Activated T-helper 1 cell treated with anti-CD3 and anti-CD28 coated beads, Interleukin-12 subunit alpha, Interleukin-12 subunit beta, Interleukin-2, Interleukin-4 antibody, amounts not matched to agents 30 ng/mL and 10 ng/mL and 1 ng/mL, durations not matched to agents 14 hours and 24 hours and 36 hours (primary cell): ENCODE measurements at regions of chr2 and their contacts with region 1.

Region 1: DNA sequence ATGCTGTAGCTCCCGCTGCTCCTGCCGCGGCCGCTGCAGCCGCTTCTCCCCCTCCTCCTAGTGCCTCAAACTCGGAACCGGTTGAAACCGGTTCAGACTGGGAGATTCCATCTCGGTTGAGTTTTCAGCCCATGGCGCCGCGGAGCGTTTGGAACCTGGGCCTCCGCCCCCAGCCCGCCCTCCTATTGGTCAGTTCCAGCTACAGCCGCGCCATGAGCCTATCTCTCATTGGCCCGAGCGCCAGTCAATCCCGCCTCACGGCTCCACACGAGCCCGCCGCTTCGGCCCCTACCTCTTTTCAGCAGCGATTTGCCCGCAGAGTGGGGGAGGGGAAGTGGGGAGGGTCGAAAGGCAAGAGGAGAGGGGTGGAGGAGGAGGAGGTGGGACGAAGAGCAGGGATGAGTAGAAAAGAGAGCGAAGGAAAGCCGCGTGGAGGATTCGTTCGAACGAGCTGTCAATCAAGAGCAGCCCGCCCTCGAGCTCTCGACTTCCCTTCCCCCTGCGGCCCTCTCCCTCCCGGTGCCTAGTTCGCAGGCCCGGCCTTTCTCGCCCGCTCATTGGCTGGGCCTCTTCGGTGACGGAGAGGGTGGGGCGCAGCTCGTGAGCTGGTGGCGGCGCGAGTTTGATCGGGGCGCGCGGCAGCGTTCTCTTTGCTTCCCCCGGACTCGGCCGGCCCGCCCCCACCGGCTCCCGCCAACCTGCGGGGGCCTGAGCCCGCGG is at the start of gene XPO1:
- DNase-seq: peak; percentile 99
- H3K4me3 Mint-ChIP-seq: peak within 1 kb of the TSS; percentile 100
- H3K27ac Mint-ChIP-seq: peak within 1 kb of the TSS; percentile 100
- H3K4me1 Mint-ChIP-seq: peaks cover 35% of the 10 kb centered on the region
- H3K27me3 Mint-ChIP-seq: peaks cover 4% of the 10 kb centered on the region
- total RNA-seq, gene XPO1: 213 and 215 TPM in 2 replicates

Region 2: DNA sequence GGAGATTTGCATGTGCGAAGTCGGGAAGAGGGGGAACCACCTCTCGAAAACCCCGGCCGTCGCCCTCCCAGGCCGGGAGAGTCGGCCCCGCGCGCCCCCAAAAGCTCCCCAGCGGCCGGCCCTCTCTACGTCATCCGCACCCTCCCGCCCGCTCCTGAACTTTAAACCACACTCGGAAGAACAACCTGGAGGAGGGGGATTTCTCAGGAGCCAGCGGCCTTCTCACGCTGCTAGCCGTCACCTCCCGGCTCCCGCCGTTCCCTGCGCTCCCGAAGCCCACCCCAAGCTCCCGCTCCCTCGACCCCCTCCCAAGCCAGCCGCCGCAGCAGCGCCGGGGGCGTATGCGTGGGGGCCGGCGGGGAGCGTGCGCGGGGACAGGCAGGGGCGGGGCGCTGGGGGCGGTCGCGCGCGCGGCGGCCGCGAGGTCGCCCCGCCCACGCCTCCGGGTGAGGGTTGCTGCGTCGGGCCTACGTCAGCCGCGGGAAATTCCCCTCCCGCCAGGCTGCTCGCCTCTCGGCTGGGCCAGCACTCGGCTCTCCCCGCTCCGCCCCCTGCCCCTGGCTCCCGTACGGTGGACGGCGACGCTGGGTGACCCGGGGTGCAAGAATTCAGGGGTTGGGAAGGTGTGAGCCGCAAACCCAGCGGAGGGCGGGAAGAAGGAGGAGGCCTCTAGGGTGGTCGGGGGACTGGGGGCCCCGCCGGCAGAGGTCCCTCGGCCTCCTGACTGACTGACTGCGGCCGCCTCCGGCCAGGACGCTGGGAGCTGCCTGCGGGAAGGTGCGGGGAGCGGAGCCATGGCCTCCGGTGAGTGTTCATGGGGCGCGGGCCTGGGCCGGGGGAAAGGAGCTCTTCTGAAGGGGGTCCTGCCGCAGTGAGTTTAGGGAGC is 657.1 kb before region 1 on chr2 and contains the start of gene REL:
- intact Hi-C with region 1: loop called (anchors 1 kb)
- DNase-seq: peak; percentile 89
- H3K4me3 Mint-ChIP-seq: peak within 1 kb of the TSS; percentile 99
- H3K27ac Mint-ChIP-seq: peak within 1 kb of the TSS; percentile 99
- H3K4me1 Mint-ChIP-seq: peaks cover 45% of the 10 kb centered on the region
- H3K27me3 Mint-ChIP-seq: no peaks in the 10 kb centered on the region
- total RNA-seq, gene REL: 93.6 and 97.2 TPM in 2 replicates

Region 3: GRCh38 chr2:61144697-61145268 is 393.6 kb before region 1 on chr2:
- intact Hi-C with region 1: loop called (anchors 1 kb)
- DNase-seq: peak; percentile 92
- H3K4me3 Mint-ChIP-seq: peak overlapping the region; percentile 94
- H3K27ac Mint-ChIP-seq: peak overlapping the region; percentile 94
- H3K4me1 Mint-ChIP-seq: peaks cover 5% of the 10 kb centered on the region
- H3K27me3 Mint-ChIP-seq: no peaks in the 10 kb centered on the region

Region 4: GRCh38 chr2:61470965-61471904 is 67.1 kb before region 1 on chr2 and contains the start of gene USP34:
- intact Hi-C with region 1: loop called (anchors 1 kb)
- DNase-seq: peak; percentile 88
- H3K4me3 Mint-ChIP-seq: peak within 1 kb of the TSS; percentile 95
- H3K27ac Mint-ChIP-seq: peak within 1 kb of the TSS; percentile 94
- H3K4me1 Mint-ChIP-seq: peaks cover 28% of the 10 kb centered on the region
- H3K27me3 Mint-ChIP-seq: no peaks in the 10 kb centered on the region
- total RNA-seq, gene USP34: 91.3 and 98.1 TPM in 2 replicates

Region 5: DNA sequence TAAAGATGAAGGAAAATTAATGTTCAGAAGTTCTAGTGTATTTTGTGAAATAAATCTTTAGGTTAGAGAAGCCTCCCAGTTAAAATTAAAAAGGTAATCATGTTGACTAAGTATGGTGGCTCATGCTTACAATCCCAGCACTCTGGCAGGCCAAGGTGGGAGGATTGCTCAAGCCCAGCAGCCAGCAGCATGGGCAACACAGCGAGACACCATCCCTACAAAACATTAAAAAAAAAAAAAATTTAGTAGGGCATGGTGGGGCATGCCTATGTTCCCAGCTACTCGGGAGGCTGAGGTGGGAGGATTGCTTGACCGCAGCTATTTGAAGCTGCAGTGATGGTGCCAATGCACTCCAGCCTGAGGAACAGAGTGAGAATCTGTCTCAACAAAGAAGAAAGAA is 18.1 kb before region 1 on chr2:
- intact Hi-C with region 1: no loop called
- DNase-seq: no peak
- H3K4me3 Mint-ChIP-seq: no peak overlapping the region
- H3K27ac Mint-ChIP-seq: no peak overlapping the region
- H3K4me1 Mint-ChIP-seq: peaks cover 29% of the 10 kb centered on the region
- H3K27me3 Mint-ChIP-seq: no peaks in the 10 kb centered on the region

Region 6: DNA sequence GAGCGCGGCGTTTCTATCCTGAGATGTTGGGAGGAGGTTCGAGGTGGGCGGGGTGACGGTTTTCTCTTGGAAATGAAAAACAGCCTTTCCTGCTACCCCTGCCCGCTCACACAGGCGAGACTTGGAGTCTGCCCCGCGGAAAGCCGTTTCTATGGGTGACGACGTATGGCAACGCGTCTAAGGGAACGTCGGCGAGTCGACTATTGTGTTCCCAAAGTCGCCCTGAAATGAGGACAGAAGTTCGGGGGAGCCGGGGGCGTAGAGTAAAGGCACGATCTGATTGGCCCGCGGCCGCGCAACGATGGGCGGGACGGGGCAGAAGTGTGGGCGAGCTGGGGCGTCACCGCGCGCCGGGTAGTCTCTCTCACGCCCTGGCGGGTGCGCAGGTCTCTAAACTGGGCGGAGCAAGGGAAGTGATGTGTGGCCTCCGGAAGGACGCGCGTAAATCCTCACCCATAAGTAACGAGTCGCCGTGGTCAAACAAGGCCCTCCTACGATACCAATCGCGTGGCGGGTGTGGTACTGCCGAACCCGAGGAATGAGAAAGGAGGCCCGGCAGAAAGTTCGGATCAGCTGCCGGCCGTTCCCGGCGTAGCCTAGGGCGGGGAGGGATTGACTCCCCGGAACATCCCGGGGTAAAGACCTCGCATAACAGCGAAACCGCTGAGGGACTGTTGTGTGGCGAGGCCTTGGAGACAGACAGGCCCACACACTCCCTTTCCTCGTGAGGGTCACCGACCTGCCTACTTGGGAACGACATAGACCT is 225.9 kb after region 1 on chr2:
- intact Hi-C with region 1: loop called (anchors 1 kb)
- DNase-seq: peak; percentile 96
- H3K4me3 Mint-ChIP-seq: peak overlapping the region; percentile 91
- H3K27ac Mint-ChIP-seq: peak overlapping the region; percentile 97
- H3K4me1 Mint-ChIP-seq: peaks cover 24% of the 10 kb centered on the region
- H3K27me3 Mint-ChIP-seq: no peaks in the 10 kb centered on the region

Region 7: GRCh38 chr2:62202019-62202722 is 663.8 kb after region 1 on chr2:
- intact Hi-C with region 1: loop called (anchors 2 kb)
- DNase-seq: no peak
- H3K4me3 Mint-ChIP-seq: peak overlapping the region; percentile 50
- H3K27ac Mint-ChIP-seq: peak overlapping the region; percentile 78
- H3K4me1 Mint-ChIP-seq: peaks cover 73% of the 10 kb centered on the region
- H3K27me3 Mint-ChIP-seq: no peaks in the 10 kb centered on the region